ENCODE measurements at regions of chrX and their contacts with region 1.

Region 1: GRCh38 chrX:15674841-15675489 is 10.4 kb upstream of the CLTRN start:
- DNase-seq: peak; percentile 89 to 95
- ATAC-seq: peak; percentile 94
- H3K4me3 ChIP-seq: peak overlapping the region; percentile 74 to 85 (median 80)
- H3K27ac ChIP-seq: peak overlapping the region; percentile 93 to 97 (median 96)
- H3K4me1 ChIP-seq: peaks cover 9 to 21% of the 10 kb centered on the region in 2 donors
- H3K27me3 ChIP-seq: no peaks in the 10 kb centered on the region
- CTCF ChIP-seq: no peak
- POLR2A ChIP-seq: peak; percentile 63 to 82

Region 2: DNA sequence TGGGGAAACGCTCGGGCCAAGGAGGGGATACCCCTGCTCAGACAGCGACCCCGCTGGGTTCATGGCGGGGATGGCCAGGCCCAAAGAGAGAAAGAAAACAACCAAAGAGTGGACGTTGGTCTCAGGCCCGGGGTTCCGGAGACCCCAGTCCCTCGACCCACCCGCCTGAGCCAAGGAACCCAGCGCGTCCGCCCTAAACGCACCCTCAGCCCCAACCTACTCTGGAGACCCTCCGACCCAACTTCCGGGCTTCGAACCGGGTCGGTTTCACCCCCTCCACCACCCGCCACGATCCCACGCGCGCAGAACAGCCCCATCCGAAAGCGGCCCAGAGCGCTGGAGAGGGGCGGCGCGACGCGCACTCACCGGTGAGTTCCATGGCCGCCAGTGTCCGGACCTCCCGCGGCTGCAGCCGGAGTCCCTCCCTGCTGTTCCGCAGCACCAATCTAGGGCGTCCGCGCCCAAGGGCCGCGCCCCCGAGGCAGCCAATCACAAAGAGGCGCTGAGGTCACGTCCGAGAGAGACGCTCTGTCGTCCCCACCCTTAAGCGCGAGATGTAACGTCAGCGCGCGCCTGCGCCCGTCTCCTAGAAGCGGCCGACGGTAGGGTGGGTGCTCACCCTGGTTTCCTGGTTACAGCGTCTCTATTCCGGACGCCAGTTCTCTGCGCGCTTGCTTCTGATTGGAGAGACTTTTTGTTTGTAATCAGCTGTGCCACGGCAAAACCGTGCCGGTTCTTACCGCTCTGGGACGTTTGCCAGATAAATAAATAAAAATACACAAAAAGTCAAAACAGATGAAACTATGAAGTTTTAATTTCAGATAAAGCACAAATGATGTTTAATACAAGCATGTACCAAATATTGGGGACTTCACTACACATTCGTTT is 339.6 kb before region 1 on chrX and contains the start of gene PIGA:
- in situ Hi-C with region 1: no loop called
- intact Hi-C with region 1: loop called (anchors 1 kb)
- DNase-seq: peak; percentile 93 to 96
- ATAC-seq: peak; percentile 95 to 96
- H3K4me3 ChIP-seq: peak within 1 kb of the TSS; percentile 63 to 78 (median 72)
- H3K27ac ChIP-seq: peak within 1 kb of the TSS; percentile 86 to 91 (median 89)
- H3K4me1 ChIP-seq: peaks cover 0 to 13% of the 10 kb centered on the region in 2 donors
- H3K27me3 ChIP-seq: no peaks in the 10 kb centered on the region
- CTCF ChIP-seq: no peak
- POLR2A ChIP-seq: peak; percentile 93 to 94
- total RNA-seq, gene PIGA: 1.5 to 5.9 (median 3.1) TPM

Region 3: GRCh38 chrX:15737960-15738902 is 63.3 kb after region 1 on chrX and contains the start of gene CA5B:
- in situ Hi-C with region 1: no loop called
- intact Hi-C with region 1: loop called (anchors 5 kb)
- DNase-seq: peak; percentile 78 to 92
- ATAC-seq: peak; percentile 96 to 97
- H3K4me3 ChIP-seq: peak within 1 kb of the TSS; percentile 48 to 59 (median 54)
- H3K27ac ChIP-seq: peak within 1 kb of the TSS; percentile 15 to 46 (median 40)
- H3K4me1 ChIP-seq: peaks cover 0 to 4% of the 10 kb centered on the region in 2 donors
- H3K27me3 ChIP-seq: no peaks in the 10 kb centered on the region
- CTCF ChIP-seq: no peak
- POLR2A ChIP-seq: no peak
- total RNA-seq, gene CA5B: 0.24 to 3.4 (median 1.8) TPM

Region 4: DNA sequence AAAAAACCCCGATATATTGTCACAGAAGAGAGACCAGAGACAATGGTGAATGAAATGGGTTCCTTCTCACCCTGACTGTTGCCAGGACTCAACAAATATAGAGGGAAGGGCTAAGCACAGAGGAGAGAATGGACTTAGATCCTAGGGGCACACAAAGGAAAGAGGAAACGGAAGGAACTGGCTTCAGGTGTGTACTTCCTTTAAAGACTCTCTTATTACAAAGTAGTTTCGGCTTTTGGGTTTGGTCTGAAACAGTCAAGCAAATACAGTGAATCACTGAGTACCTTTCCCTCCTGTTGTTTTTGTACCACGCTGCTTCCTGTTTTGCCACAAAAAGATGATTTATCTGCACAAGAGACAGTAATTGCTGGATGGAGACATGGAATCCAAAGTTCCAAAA is 928.9 kb after region 1 on chrX:
- in situ Hi-C with region 1: no loop called
- intact Hi-C with region 1: loop called (anchors 5 kb)
- DNase-seq: no peak
- ATAC-seq: no peak
- H3K4me3 ChIP-seq: no peak overlapping the region
- H3K27ac ChIP-seq: peak overlapping the region; percentile 25 to 60 (median 44)
- H3K4me1 ChIP-seq: peaks cover 17 to 20% of the 10 kb centered on the region in 2 donors
- H3K27me3 ChIP-seq: no peaks in the 10 kb centered on the region
- CTCF ChIP-seq: no peak
- POLR2A ChIP-seq: no peak

Region 5: GRCh38 chrX:16786139-16786790 is 1111.3 kb after region 1 on chrX and contains the start of gene TXLNG:
- in situ Hi-C with region 1: no loop called
- intact Hi-C with region 1: loop called (anchors 2 kb)
- DNase-seq: peak; percentile 97 to 98
- ATAC-seq: peak; percentile 97 to 99
- H3K4me3 ChIP-seq: peak within 1 kb of the TSS; percentile 68 to 84 (median 74)
- H3K27ac ChIP-seq: peak within 1 kb of the TSS; percentile 91 to 93 (median 92)
- H3K4me1 ChIP-seq: peaks cover 3 to 7% of the 10 kb centered on the region in 2 donors
- H3K27me3 ChIP-seq: no peaks in the 10 kb centered on the region
- CTCF ChIP-seq: no peak
- POLR2A ChIP-seq: peak; percentile 87 to 92
- total RNA-seq, gene TXLNG: 6.9 to 16.9 (median 9.6) TPM

Measured in gastrocnemius medialis (tissue), 4 donors.